CD8-positive, alpha-beta T cell (primary cell): ENCODE measurements at regions of chr18 and their contacts with region 1.

Region 1: DNA sequence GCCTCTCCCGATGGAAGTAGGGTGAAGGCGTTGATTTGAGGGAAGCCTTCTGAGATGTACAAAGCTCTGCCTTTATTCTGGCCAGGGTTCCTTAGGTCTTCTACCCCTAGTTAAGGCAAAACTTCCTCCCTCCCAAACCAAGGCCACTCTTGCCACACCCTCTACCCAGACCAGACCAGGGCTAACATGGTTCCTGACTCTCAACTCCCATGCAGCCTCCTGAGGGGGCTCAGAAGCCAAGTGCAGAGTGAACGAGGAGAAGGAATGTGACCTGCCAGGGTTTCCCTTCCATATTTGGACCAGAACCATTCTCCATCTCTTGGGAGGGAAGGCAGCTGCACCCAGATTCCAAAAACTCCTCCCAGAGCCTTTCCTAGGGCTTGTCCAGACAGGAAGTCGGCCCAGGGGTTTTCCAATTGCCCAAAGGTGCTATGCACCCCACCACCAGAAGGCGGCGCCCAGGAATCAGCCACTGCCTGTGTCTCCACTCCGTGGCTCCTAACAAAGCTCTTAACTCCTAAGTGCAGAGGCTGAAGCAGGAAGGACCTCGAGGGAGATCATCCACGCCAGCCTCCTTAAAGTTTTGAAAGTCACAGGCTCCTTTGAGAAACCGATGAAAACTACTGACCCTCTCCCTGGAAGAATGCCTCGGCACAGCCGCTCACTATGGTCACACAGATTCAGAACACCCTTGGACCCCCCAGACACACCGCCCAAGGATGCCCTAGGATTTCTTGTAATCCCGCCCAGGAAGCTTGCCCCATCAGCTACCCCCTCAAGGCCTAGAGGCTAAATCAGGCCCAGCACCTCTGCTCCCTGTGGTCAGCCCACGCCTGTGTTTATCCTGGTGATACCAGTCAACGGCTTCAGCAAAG is 157.8 kb downstream of the SMAD2 start:
- DNase-seq: peak; percentile 12 to 77 (median 50)
- ATAC-seq: peak; percentile 48
- H3K4me3 ChIP-seq: no peak overlapping the region
- H3K4me3 Mint-ChIP-seq: no peak overlapping the region
- H3K27ac ChIP-seq: no peak overlapping the region
- H3K27ac Mint-ChIP-seq: no peak overlapping the region
- H3K4me1 ChIP-seq: no peaks in the 10 kb centered on the region
- H3K4me1 Mint-ChIP-seq: no peaks in the 10 kb centered on the region
- H3K27me3 ChIP-seq: no peaks in the 10 kb centered on the region
- H3K27me3 Mint-ChIP-seq: peaks cover 7% of the 10 kb centered on the region
- CTCF ChIP-seq: peak; percentile 86

Region 2: DNA sequence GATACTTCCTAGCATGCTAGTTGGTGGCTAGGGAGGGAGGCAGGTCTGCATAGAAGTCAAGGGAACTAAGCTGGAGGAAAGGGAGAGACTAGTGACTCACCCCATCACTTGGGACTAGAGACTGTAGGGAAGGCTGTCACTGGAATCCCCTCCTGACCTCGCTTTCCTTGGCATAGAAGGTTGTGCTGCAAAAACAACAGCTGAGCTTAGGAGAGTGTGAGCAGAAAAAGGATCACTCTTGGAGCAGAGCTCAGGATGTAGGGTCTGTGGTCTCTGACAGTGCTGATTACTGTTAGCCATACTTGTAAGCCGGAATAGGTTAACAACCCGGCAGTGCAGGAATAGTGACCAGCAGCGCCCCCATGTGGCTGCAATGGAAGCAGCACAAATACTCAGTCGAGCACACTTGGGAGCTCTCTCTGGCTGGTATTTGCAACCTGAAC is 224.7 kb after region 1 on chr18:
- CTCF ChIA-PET with region 1: interaction called, 3 read pairs
- POLR2A ChIA-PET with region 1: no interaction called
- intact Hi-C with region 1: loop called in 1 of 2 experiments (anchors 2 kb)
- DNase-seq: peak in 4 of 9 experiments; percentile 22 to 49 (median 34)
- ATAC-seq: no peak
- H3K4me3 ChIP-seq: no peak overlapping the region
- H3K4me3 Mint-ChIP-seq: no peak overlapping the region
- H3K27ac ChIP-seq: no peak overlapping the region
- H3K27ac Mint-ChIP-seq: no peak overlapping the region
- H3K4me1 ChIP-seq: no peaks in the 10 kb centered on the region
- H3K4me1 Mint-ChIP-seq: no peaks in the 10 kb centered on the region
- H3K27me3 ChIP-seq: no peaks in the 10 kb centered on the region
- H3K27me3 Mint-ChIP-seq: no peaks in the 10 kb centered on the region
- CTCF ChIP-seq: peak; percentile 29

Region 3: GRCh38 chr18:48007955-48008701 is 235.5 kb after region 1 on chr18:
- CTCF ChIA-PET with region 1: no interaction called
- POLR2A ChIA-PET with region 1: no interaction called
- intact Hi-C with region 1: loop called in 1 of 2 experiments (anchors 5 kb)
- DNase-seq: peak in 8 of 9 experiments; percentile 33 to 70 (median 47)
- ATAC-seq: peak; percentile 88
- H3K4me3 ChIP-seq: peak overlapping the region; percentile 29 to 58
- H3K4me3 Mint-ChIP-seq: peak overlapping the region; percentile 80
- H3K27ac ChIP-seq: no peak overlapping the region
- H3K27ac Mint-ChIP-seq: no peak overlapping the region
- H3K4me1 ChIP-seq: peaks cover 10% of the 10 kb centered on the region
- H3K4me1 Mint-ChIP-seq: peaks cover 7% of the 10 kb centered on the region
- H3K27me3 ChIP-seq: peaks cover 3 to 4% of the 10 kb centered on the region in 2 experiments
- H3K27me3 Mint-ChIP-seq: peaks cover 28% of the 10 kb centered on the region
- CTCF ChIP-seq: peak; percentile 76

Region 4: GRCh38 chr18:48017635-48018034 is 245.0 kb after region 1 on chr18:
- CTCF ChIA-PET with region 1: interaction called, 14 read pairs
- POLR2A ChIA-PET with region 1: no interaction called
- intact Hi-C with region 1: loop called in 1 of 2 experiments (anchors 1 kb)
- DNase-seq: no peak
- ATAC-seq: no peak
- H3K4me3 ChIP-seq: no peak overlapping the region
- H3K4me3 Mint-ChIP-seq: no peak overlapping the region
- H3K27ac ChIP-seq: no peak overlapping the region
- H3K27ac Mint-ChIP-seq: no peak overlapping the region
- H3K4me1 ChIP-seq: no peaks in the 10 kb centered on the region
- H3K4me1 Mint-ChIP-seq: peaks cover 5% of the 10 kb centered on the region
- H3K27me3 ChIP-seq: no peaks in the 10 kb centered on the region
- H3K27me3 Mint-ChIP-seq: peaks cover 22% of the 10 kb centered on the region
- CTCF ChIP-seq: no peak

Region 5: DNA sequence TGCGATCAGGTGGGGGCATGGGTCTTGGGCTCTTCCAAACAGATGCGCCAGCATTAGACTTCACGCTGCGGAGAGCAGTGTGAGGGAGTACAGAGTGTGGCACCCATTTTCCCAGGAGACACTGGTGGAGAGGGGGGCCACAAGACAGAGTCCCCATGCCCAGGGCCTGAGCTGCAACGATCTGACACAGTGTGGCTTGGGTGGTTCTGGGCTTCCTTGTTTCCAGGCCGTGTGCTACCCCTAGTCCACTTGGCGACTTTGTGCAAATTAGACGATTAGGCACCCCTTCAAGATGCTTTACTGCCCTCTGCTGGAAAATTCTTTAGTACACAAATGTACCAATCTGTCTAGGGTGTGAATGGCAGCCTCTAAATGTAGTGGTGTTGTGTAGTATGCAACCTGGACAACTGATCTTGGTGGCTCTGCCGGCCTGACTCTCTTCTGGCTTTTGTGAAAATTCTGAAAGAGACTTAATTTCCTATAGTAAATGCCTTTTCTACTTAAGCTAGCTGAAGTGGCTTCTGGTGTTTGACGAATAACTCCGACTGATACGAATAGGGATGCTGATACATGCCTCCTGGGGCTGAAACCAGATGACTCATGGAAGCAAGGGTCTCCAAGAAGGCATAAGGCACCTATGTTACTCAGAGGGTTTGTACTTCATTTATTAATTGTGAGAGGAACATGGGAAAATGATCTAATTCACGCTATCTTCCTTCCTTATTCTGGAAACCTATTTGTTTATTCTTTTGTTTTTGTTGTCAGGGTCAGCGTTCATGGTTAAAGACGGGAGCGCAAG is 250.1 kb after region 1 on chr18:
- CTCF ChIA-PET with region 1: interaction called, 14 read pairs
- POLR2A ChIA-PET with region 1: no interaction called
- intact Hi-C with region 1: loop called in 1 of 2 experiments (anchors 1 kb)
- DNase-seq: peak in 2 of 9 experiments; percentile 44 to 63
- ATAC-seq: peak; percentile 49
- H3K4me3 ChIP-seq: no peak overlapping the region
- H3K4me3 Mint-ChIP-seq: no peak overlapping the region
- H3K27ac ChIP-seq: no peak overlapping the region
- H3K27ac Mint-ChIP-seq: no peak overlapping the region
- H3K4me1 ChIP-seq: no peaks in the 10 kb centered on the region
- H3K4me1 Mint-ChIP-seq: peaks cover 5% of the 10 kb centered on the region
- H3K27me3 ChIP-seq: peaks cover 0 to 4% of the 10 kb centered on the region in 2 experiments
- H3K27me3 Mint-ChIP-seq: peaks cover 18% of the 10 kb centered on the region
- CTCF ChIP-seq: peak; percentile 37

Region 6: GRCh38 chr18:48445540-48445939 is 672.9 kb after region 1 on chr18:
- CTCF ChIA-PET with region 1: interaction called, 5 read pairs
- POLR2A ChIA-PET with region 1: no interaction called
- intact Hi-C with region 1: loop called in 1 of 2 experiments (anchors 2 kb)
- DNase-seq: peak; percentile 31 to 76 (median 64)
- ATAC-seq: peak; percentile 73
- H3K4me3 ChIP-seq: no peak overlapping the region
- H3K4me3 Mint-ChIP-seq: no peak overlapping the region
- H3K27ac ChIP-seq: no peak overlapping the region
- H3K27ac Mint-ChIP-seq: no peak overlapping the region
- H3K4me1 ChIP-seq: no peaks in the 10 kb centered on the region
- H3K4me1 Mint-ChIP-seq: peaks cover 9% of the 10 kb centered on the region
- H3K27me3 ChIP-seq: no peaks in the 10 kb centered on the region
- H3K27me3 Mint-ChIP-seq: peaks cover 27% of the 10 kb centered on the region
- CTCF ChIP-seq: peak; percentile 74

Region 7: DNA sequence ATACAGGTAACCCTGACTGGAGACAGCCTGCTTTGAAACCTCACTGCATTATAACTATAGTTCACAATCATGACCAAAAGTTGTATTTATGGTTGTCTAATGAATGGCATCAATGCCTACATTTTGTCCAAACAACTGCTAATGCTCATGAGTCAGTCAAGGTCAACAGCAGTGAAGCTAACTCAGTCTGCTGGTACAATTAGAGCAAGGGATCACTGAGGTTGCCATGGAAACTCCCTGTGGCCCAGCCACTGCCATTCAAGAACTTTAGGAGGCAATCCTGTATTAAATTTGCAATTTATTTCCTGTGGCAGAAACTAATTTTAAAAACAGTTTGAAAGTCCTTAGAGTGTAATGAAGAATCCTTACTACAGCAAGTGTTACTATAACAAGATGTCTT is 1363.3 kb after region 1 on chr18:
- CTCF ChIA-PET with region 1: no interaction called
- POLR2A ChIA-PET with region 1: no interaction called
- intact Hi-C with region 1: no loop called
- DNase-seq: no peak
- ATAC-seq: no peak
- H3K4me3 ChIP-seq: no peak overlapping the region
- H3K4me3 Mint-ChIP-seq: no peak overlapping the region
- H3K27ac ChIP-seq: no peak overlapping the region
- H3K27ac Mint-ChIP-seq: no peak overlapping the region
- H3K4me1 ChIP-seq: no peaks in the 10 kb centered on the region
- H3K4me1 Mint-ChIP-seq: no peaks in the 10 kb centered on the region
- H3K27me3 ChIP-seq: no peaks in the 10 kb centered on the region
- H3K27me3 Mint-ChIP-seq: no peaks in the 10 kb centered on the region
- CTCF ChIP-seq: no peak